GM12878 (cell line): ENCODE measurements at regions of chr12 and their contacts with region 1.

Region 1: DNA sequence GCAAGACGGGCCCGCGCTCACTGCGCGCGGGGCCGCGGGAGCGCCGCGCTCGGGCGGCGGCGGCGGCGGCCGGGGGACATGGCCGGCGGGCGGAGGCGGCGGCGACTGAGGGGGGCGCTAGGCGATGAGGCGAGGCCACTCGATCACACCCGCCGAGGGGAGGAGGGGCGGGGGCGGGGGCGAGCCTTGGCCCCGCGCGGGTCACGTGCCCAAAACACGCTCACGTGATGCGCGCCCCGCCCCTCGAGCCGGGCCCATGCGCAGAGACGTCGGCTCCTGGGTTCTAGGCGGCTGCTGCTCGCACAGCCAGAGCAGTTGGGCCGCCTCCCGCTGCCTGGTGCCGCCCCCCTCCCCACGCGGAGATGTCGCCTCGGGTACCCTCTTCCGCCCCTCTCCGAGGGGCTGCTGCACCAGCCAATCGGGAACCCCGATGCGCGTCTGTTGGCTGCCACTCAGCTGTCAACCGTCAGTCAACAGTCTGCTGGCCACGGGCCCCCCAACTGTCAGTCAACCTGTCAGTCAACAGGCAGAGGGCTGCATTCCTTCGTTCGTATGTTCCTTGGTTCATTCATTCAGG is at the start of gene SPPL3:
- DNase-seq: peak; percentile 43
- ATAC-seq: peak; percentile 81
- H3K4me3 ChIP-seq: peak within 1 kb of the TSS; percentile 91
- H3K27ac ChIP-seq: peak within 1 kb of the TSS; percentile 79
- H3K4me1 ChIP-seq: 0 out of 2 replicates have a peak, but pooled peaks cover 3% of the 10 kb centered on the region
- H3K27me3 ChIP-seq: no peaks in the 10 kb centered on the region
- CTCF ChIP-seq: peak in 1 of 3 experiments; percentile 33; a peak in 2 of 6 replicates
- EP300 ChIP-seq: no peak
- POLR2A ChIP-seq: peak; percentile 71
- RAD21 ChIP-seq: no peak
- polyA plus RNA-seq, gene SPPL3: 5.7 to 8.3 TPM

Region 2: GRCh38 chr12:120797677-120798642 is 106.3 kb before region 1 on chr12:
- CTCF ChIA-PET with region 1: interaction called, 3 read pairs
- POLR2A ChIA-PET with region 1: interaction called, 5 read pairs
- RAD21 ChIA-PET with region 1: interaction called, 19 read pairs
- SMC1A ChIA-PET with region 1: interaction called, 23 read pairs
- in situ Hi-C with region 1: no loop called
- intact Hi-C with region 1: loop called (anchors 2 kb)
- DNase-seq: peak; percentile 51
- ATAC-seq: peak; percentile 66
- H3K4me3 ChIP-seq: peak overlapping the region; percentile 35
- H3K27ac ChIP-seq: peak overlapping the region; percentile 76
- H3K4me1 ChIP-seq: peaks cover 46% of the 10 kb centered on the region
- H3K27me3 ChIP-seq: no peaks in the 10 kb centered on the region
- CTCF ChIP-seq: 0 out of 6 replicates have a peak, but pooled peaks of 2 of the 3 experiments have one; percentile 1 to 5
- EP300 ChIP-seq: no peak
- POLR2A ChIP-seq: no peak
- RAD21 ChIP-seq: peak; percentile 32; the same call in 1 of the 2 replicates

Region 3: DNA sequence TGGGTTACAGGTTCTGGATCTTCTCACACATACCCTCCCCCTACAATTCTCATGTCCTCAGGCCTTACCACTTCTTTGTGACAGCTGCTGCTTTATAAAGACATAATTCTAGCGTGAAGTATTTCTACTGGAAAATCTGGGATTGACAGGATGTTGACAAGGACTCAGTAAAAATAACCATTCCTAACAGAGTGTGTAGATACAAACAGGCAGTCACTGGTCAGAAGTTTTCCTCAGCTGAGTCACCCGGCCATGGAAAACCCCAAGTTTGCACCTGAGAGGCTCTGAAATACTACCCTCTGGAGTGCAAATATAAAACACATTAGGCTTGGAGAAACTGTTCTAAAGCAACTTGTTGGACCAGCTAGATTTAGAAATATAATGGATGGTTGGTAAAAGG is 54.5 kb before region 1 on chr12:
- CTCF ChIA-PET with region 1: interaction called, 4 read pairs
- POLR2A ChIA-PET with region 1: interaction called, 3 read pairs
- RAD21 ChIA-PET with region 1: interaction called, 10 read pairs
- SMC1A ChIA-PET with region 1: interaction called, 3 read pairs
- in situ Hi-C with region 1: no loop called
- intact Hi-C with region 1: loop called (anchors 5 kb)
- DNase-seq: no peak
- ATAC-seq: no peak
- H3K4me3 ChIP-seq: no peak overlapping the region
- H3K27ac ChIP-seq: peak overlapping the region; percentile 54
- H3K4me1 ChIP-seq: peaks cover 68% of the 10 kb centered on the region
- H3K27me3 ChIP-seq: no peaks in the 10 kb centered on the region
- CTCF ChIP-seq: no peak
- EP300 ChIP-seq: no peak
- POLR2A ChIP-seq: no peak
- RAD21 ChIP-seq: no peak

Region 4: DNA sequence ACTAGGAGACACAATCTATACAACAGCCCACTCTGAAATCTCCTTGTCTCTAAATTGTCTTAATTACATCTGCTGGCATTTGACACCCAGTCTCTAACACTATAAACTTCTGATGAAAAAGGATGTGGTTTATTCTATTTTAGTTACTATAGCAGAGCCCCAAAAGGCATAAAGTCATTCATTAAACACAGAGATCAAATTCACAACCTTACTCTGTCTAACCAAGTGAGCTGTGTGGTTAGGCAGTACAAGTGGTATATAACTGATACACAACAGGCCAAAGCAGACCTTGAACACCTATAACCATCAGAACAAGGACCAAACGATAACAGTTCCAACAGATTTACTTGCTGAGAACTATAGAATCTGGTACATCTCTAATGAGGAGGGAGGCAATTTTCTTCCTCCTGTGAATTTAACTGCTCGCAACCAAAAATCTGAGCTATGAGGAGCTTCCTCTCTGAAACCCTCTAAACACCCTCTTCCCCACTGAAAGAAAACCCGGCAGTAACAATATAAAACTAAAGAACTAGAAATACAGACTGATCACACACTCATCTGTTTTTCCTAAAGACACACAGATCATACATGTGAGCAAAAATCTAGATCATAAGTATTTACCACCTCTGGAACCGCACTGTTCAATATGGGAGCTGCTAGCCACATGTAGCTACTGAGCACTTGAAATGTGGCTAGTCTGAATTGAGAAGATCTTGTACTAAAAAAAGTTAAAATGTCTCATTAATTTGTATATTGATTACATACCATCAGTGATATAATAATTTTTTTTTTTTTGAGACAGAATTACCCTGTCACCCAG is 17.9 kb before region 1 on chr12:
- CTCF ChIA-PET with region 1: interaction called, 12 read pairs
- POLR2A ChIA-PET with region 1: interaction called, 14 read pairs
- RAD21 ChIA-PET with region 1: interaction called, 16 read pairs
- SMC1A ChIA-PET with region 1: interaction called, 38 read pairs
- in situ Hi-C with region 1: no loop called
- intact Hi-C with region 1: no loop called
- DNase-seq: peak; percentile 68
- ATAC-seq: peak; percentile 90
- H3K4me3 ChIP-seq: no peak overlapping the region
- H3K27ac ChIP-seq: peak overlapping the region; percentile 84
- H3K4me1 ChIP-seq: peaks cover 20% of the 10 kb centered on the region; the same call in 1 of the 2 replicates
- H3K27me3 ChIP-seq: no peaks in the 10 kb centered on the region
- CTCF ChIP-seq: no peak
- EP300 ChIP-seq: 0 out of 4 replicates have a peak, but pooled peaks of 1 of the 2 experiments have one; percentile 13
- POLR2A ChIP-seq: no peak
- RAD21 ChIP-seq: no peak

Region 5: DNA sequence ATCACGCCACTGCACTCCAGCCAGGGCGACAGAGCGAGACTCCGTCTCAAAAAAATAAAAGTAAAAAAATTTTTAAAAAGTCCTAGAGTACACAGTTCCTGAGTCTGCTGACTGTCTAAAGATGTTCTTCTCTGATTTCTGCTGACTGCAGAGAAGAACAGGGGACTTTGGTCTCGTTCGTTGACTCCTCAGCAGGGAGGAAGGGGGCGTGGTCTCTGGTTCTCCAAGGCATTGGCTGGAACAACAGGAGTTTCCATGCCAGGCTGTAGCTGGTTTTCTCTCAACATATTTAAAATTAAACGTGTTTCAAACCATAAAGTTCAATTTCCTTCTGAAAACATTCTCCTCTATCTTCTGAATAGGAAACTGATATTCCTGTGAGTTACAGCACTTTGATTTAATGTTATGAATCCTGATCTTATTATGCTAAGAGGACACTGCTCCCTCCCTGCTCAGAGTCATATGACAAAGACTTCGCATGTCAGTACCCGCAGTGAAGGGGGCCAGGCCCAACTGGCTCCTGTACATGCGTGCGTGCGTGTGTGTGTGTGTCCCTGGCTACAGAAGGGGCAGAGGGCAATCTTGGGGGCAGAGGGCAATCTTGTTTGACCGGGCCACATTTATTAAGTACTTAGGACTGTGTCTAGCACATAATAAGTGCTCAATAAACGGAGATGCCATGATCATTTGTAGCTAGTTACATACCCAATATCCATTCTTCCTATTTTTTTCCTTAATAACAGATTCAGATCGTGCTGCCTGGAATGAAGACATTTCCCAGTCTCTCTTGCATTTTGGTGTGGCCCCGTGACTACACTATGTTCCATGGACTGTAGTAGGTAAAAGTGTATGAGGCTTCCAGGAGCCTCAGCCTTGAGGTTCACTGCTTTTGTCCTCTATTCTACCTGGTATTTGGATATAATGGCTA is 57.6 kb after region 1 on chr12:
- CTCF ChIA-PET with region 1: interaction called, 3 read pairs
- POLR2A ChIA-PET with region 1: interaction called, 3 read pairs
- RAD21 ChIA-PET with region 1: interaction called, 3 read pairs
- SMC1A ChIA-PET with region 1: interaction called, 4 read pairs
- in situ Hi-C with region 1: no loop called
- intact Hi-C with region 1: loop called (anchors 5 kb)
- DNase-seq: no peak
- ATAC-seq: no peak
- H3K4me3 ChIP-seq: no peak overlapping the region
- H3K27ac ChIP-seq: no peak overlapping the region
- H3K4me1 ChIP-seq: peaks cover 10% of the 10 kb centered on the region
- H3K27me3 ChIP-seq: no peaks in the 10 kb centered on the region
- CTCF ChIP-seq: no peak
- EP300 ChIP-seq: no peak
- POLR2A ChIP-seq: no peak
- RAD21 ChIP-seq: no peak